ENCODE measurements at regions of chr3 and their contacts with region 1.

Region 1: DNA sequence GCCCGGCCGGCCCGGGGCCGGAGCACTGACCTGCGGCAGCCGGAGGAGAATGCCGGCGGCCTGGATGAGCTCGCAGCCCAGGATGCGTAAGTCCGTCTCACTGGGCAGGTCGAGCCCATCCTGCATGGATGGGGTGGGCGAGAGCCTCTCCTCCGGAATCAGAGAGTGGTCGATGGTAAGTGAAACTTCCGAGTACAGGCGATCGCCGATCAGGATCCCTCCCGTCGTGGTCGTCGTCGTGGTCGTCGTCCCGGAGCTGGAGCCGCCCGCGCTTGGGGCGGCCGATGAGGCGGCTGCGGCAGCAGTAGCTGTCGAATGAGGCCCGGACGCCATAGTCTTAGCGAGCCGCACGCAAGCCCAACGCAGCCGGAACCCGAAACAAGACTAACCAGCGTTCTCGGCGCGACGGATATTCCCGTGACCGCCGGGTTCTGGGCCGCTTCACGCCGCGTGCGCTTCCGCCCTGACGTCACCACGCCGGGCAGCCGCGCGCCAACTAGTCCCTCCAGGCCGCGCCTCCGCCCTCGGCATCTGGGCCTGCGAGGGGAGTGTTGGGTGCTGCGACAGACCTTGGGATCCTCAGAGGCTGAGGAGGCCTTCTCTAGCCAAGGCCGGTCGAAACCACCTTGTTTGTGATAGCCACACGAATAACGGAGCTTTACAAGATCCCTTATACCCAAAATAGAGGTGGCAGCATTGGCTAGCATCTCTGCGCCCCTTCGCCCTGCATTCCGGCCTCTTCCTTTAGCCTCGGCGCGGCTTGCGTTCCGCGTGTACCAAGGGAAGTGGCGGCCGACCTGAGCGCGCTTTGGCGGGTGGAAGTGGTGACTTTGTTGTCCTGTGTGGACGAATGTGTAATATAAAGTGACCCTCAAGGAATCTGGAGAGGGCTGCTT is at the start of gene CCNL1:
- DNase-seq: peak; percentile 93 to 97 (median 96)
- H3K4me3 ChIP-seq: peak within 1 kb of the TSS; percentile 87 to 97
- H3K4me3 Mint-ChIP-seq: peak within 1 kb of the TSS; percentile 92 to 99 (median 96)
- H3K27ac ChIP-seq: peak within 1 kb of the TSS; percentile 100
- H3K27ac Mint-ChIP-seq: peak within 1 kb of the TSS; percentile 99 to 100 (median 100)
- H3K4me1 ChIP-seq: peaks cover 57% of the 10 kb centered on the region
- H3K4me1 Mint-ChIP-seq: peaks cover 37 to 64% (median 51%) of the 10 kb centered on the region in 4 donors
- H3K27me3 ChIP-seq: no peaks in the 10 kb centered on the region
- H3K27me3 Mint-ChIP-seq: no peaks in the 10 kb centered on the region
- total RNA-seq, gene CCNL1: 327 to 330 TPM

Region 2: GRCh38 chr3:155854141-155854940 is 1305.7 kb before region 1 on chr3 and contains the start of gene SLC33A1:
- CTCF ChIA-PET with region 1: no interaction called
- POLR2A ChIA-PET with region 1: interaction called, 8 read pairs
- intact Hi-C with region 1: loop called (anchors 1 kb)
- DNase-seq: peak; percentile 99
- H3K4me3 ChIP-seq: peak within 1 kb of the TSS; percentile 98
- H3K4me3 Mint-ChIP-seq: peak within 1 kb of the TSS; percentile 89 to 98 (median 96)
- H3K27ac ChIP-seq: peak within 1 kb of the TSS; percentile 77
- H3K27ac Mint-ChIP-seq: peak within 1 kb of the TSS; percentile 94 to 100 (median 99)
- H3K4me1 ChIP-seq: peaks cover 44% of the 10 kb centered on the region
- H3K4me1 Mint-ChIP-seq: peaks cover 27 to 58% (median 38%) of the 10 kb centered on the region in 4 donors
- H3K27me3 ChIP-seq: no peaks in the 10 kb centered on the region
- H3K27me3 Mint-ChIP-seq: no peaks in the 10 kb centered on the region
- total RNA-seq, gene SLC33A1: 44.9 to 45.8 TPM

Region 3: DNA sequence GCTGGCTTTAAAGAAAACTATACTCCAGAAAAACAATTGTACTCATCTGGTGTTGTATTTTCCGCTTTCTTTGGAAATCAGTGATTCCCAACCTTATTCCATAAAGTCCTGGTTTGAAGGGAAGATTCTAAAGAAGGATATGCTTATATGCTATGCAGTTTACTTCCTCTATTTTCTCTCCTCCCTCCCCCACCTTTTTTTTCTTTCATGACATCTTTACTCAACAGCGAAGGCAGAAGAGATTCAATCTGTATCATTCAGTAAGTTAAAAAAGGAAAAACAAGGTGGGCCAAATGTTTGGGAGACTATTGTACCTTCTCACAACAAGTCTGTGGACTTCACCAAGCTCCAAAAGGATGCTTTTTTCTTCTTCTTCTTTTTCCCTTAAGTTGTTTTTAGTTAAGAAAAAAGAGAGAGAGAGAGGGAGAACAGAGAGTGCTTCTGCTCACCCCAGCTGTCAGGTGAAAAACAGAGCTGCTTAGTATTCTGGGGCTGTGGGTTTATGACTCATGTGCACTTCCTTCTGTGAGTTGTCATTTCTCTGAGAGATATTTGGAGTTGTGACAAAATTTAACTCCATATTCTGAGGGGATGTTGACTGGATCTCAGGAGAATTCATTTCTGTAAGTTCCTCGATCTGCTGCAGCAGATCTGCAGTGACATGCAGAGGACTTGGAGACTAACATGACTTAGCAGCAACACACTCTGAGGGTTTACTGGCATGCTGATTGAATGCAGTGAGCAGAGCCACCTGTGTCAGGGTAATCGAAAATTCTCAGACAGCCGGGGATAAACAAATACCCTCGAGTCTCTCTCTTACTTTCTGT is 675.8 kb before region 1 on chr3:
- CTCF ChIA-PET with region 1: no interaction called
- POLR2A ChIA-PET with region 1: interaction called, 30 read pairs
- intact Hi-C with region 1: no loop called
- DNase-seq: peak; percentile 55 to 81 (median 64)
- H3K4me3 ChIP-seq: peak overlapping the region; percentile 42 to 55
- H3K4me3 Mint-ChIP-seq: peak overlapping the region; percentile 21 to 87 (median 77)
- H3K27ac ChIP-seq: peak overlapping the region; percentile 63
- H3K27ac Mint-ChIP-seq: peak overlapping the region; percentile 77 to 94 (median 92)
- H3K4me1 ChIP-seq: peaks cover 43% of the 10 kb centered on the region
- H3K4me1 Mint-ChIP-seq: peaks cover 32 to 52% (median 39%) of the 10 kb centered on the region in 4 donors
- H3K27me3 ChIP-seq: no peaks in the 10 kb centered on the region
- H3K27me3 Mint-ChIP-seq: no peaks in the 10 kb centered on the region

Region 4: DNA sequence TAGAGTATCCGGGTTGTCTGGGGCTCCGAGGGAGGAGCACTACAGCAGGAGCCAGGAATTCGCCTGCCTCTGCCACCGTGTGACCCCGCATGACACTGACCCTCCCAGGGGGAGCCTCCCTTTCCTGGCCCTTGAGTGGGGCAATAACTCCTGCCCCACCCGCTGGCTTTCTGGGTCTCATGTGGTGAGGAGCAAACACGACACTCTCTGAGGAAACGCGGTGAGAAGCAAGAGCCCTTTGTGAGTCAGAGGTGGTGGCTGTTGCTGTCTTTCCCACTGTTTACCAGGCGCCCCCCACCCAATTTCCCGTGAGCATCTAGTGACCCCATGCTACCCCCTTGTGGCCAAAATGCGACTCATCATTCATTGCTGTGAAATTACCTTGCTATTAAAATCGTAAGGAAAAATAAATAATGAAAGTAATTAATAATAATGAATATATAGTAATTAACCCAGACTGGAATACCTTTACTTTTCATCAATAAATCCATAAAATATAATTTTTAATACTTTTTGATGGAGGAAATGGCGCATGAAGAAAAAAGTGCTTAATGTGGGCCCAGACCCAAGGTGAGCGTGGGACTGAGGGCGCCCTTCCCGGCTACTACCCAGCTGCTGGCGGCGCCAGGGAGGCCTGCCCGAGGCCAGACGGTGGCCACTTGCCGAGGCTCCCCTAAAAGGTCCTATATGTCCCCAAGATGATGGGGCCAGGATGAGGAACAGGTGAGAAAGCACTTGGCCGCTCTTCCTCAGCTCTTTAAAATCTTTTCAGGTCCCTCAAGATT is 29.4 kb before region 1 on chr3:
- CTCF ChIA-PET with region 1: interaction called, 5 read pairs
- POLR2A ChIA-PET with region 1: interaction called, 18 read pairs
- intact Hi-C with region 1: no loop called
- DNase-seq: peak; percentile 81 to 94 (median 84)
- H3K4me3 ChIP-seq: peak overlapping the region; percentile 4 to 45
- H3K4me3 Mint-ChIP-seq: peak overlapping the region; percentile 50 to 91 (median 76)
- H3K27ac ChIP-seq: peak overlapping the region; percentile 83
- H3K27ac Mint-ChIP-seq: peak overlapping the region; percentile 95 to 99 (median 97)
- H3K4me1 ChIP-seq: peaks cover 73% of the 10 kb centered on the region
- H3K4me1 Mint-ChIP-seq: peaks cover 48 to 86% (median 66%) of the 10 kb centered on the region in 4 donors
- H3K27me3 ChIP-seq: no peaks in the 10 kb centered on the region
- H3K27me3 Mint-ChIP-seq: no peaks in the 10 kb centered on the region

Region 5: GRCh38 chr3:157174649-157175498 is 14.9 kb after region 1 on chr3:
- CTCF ChIA-PET with region 1: interaction called, 52 read pairs
- POLR2A ChIA-PET with region 1: interaction called, 676 read pairs
- intact Hi-C with region 1: loop called (anchors 1 kb)
- DNase-seq: peak; percentile 95 to 99 (median 99)
- H3K4me3 ChIP-seq: peak overlapping the region; percentile 82 to 95
- H3K4me3 Mint-ChIP-seq: peak overlapping the region; percentile 85 to 96 (median 93)
- H3K27ac ChIP-seq: peak overlapping the region; percentile 94
- H3K27ac Mint-ChIP-seq: peak overlapping the region; percentile 94 to 99 (median 98)
- H3K4me1 ChIP-seq: peaks cover 22% of the 10 kb centered on the region
- H3K4me1 Mint-ChIP-seq: peaks cover 10 to 30% (median 21%) of the 10 kb centered on the region in 4 donors
- H3K27me3 ChIP-seq: no peaks in the 10 kb centered on the region
- H3K27me3 Mint-ChIP-seq: no peaks in the 10 kb centered on the region

Region 6: DNA sequence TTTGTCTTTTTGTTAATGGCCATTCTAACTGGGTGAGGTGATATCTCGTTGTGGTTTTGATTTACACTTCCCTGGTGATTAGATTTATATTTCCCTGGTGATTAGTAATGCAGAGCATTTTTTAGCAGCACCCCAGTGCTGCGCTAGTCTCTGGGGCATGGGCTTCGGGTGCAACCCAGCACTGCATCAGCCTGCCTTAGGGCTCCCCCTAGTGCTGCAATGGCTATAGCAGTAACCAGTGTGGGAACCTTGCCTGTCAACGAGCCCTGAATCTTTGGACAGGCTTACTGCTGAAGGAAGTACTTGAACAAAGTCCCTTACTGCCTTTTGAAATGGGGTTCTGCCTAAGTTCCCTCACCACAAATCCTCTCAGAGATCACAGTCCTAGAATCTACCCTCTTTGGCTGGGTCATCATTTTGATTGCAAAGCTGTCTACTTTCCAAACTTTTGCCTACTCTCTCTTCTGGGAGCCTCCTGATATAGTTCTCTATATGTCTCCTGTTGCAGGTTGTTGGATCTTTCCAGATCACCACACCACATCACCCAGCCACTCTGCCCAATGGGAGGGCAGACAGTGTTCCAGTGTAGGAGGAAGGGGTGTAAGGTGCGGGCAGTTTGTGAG is 79.2 kb after region 1 on chr3:
- CTCF ChIA-PET with region 1: interaction called, 3 read pairs
- POLR2A ChIA-PET with region 1: interaction called, 10 read pairs
- intact Hi-C with region 1: loop called (anchors 1 kb)
- DNase-seq: peak; percentile 55 to 70 (median 65)
- H3K4me3 ChIP-seq: no peak overlapping the region
- H3K4me3 Mint-ChIP-seq: no peak overlapping the region
- H3K27ac ChIP-seq: no peak overlapping the region
- H3K27ac Mint-ChIP-seq: peak overlapping the region in 2 of 7 donors; percentile 29 to 32
- H3K4me1 ChIP-seq: no peaks in the 10 kb centered on the region
- H3K4me1 Mint-ChIP-seq: peaks cover 0 to 5% (median 3%) of the 10 kb centered on the region in 4 donors
- H3K27me3 ChIP-seq: no peaks in the 10 kb centered on the region
- H3K27me3 Mint-ChIP-seq: peaks cover 1 to 4% of the 10 kb centered on the region in 2 donors

Measured in CD4-positive, alpha-beta memory T cell (primary cell).